Sigmoid colon (tissue), 7 donors: ENCODE measurements at regions of chr1 and their contacts with region 1.

Region 1: GRCh38 chr1:72186733-72187307 is 95.5 kb downstream of the NEGR1 start:
- DNase-seq: no peak
- H3K4me3 ChIP-seq: no peak overlapping the region
- H3K27ac ChIP-seq: no peak overlapping the region
- H3K4me1 ChIP-seq: peaks cover 0 to 46% (median 27%) of the 10 kb centered on the region in 4 donors
- H3K27me3 ChIP-seq: no peaks in the 10 kb centered on the region
- CTCF ChIP-seq: peak in 3 of 4 experiments; percentile 28 to 62 (median 49)
- EP300 ChIP-seq: no peak
- POLR2A ChIP-seq: no peak

Region 2: GRCh38 chr1:71733121-71733520 is 453.7 kb before region 1 on chr1:
- intact Hi-C with region 1: no loop called
- DNase-seq: no peak
- H3K4me3 ChIP-seq: no peak overlapping the region
- H3K27ac ChIP-seq: no peak overlapping the region
- H3K4me1 ChIP-seq: no peaks in the 10 kb centered on the region
- H3K27me3 ChIP-seq: no peaks in the 10 kb centered on the region
- CTCF ChIP-seq: no peak
- EP300 ChIP-seq: no peak
- POLR2A ChIP-seq: no peak

Region 3: DNA sequence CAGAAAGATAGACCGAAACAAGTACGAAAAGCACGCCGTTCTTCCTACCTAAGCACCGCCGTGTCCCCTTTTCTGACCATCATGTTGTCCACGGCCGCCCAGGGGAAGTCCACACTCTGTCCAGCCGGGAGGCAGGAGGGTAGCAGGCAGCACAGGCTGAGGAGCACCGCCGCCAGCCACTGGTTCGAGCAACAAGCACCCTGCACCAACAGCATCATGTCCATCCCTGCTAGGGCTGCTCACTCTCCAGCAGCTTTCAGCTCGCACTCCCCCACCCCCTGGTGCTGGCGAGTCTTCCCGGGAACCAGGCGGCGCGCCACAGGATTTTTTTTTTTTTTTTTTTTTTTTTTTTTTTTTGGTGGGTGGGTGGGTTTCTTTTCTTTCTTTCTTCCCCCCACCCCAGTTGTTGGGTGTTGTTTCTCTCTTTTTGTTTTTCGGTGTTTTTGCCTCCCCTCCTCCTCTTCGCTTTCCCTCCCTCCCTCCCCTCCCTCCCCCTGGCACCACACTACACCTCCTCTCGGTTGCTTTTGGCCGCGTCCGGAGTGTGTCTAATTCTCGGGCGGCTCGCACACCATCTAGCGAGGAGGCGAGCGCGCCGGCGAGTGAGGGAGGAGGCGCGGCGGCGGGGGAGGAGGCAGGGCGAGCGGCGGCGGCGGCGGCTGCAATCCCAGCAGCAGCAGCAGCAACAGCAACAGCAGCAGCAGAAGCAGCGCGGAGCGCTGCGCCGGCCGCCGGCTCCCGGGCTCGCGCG is 95.6 kb after region 1 on chr1 and contains the start of gene NEGR1:
- intact Hi-C with region 1: loop called (anchors 2 kb)
- DNase-seq: peak; percentile 96
- H3K4me3 ChIP-seq: peak within 1 kb of the TSS; percentile 67 to 81 (median 72)
- H3K27ac ChIP-seq: peak within 1 kb of the TSS; percentile 93 to 97 (median 96)
- H3K4me1 ChIP-seq: peaks cover 0 to 44% (median 21%) of the 10 kb centered on the region in 4 donors
- H3K27me3 ChIP-seq: no peaks in the 10 kb centered on the region
- CTCF ChIP-seq: peak in 2 of 4 experiments; percentile 17 to 28
- EP300 ChIP-seq: no peak
- POLR2A ChIP-seq: peak in 1 of 2 donors; percentile 42
- total RNA-seq, gene NEGR1: 42.5 to 69.2 (median 60.0) TPM